ENCODE measurements at regions of chr6 and their contacts with region 1.

Region 1: GRCh38 chr6:33344701-33345697 is 27.5 kb upstream of the ZBTB22 start:
- DNase-seq: peak; percentile 33 to 94 (median 70)
- ATAC-seq: peak; percentile 58
- H3K4me3 ChIP-seq: peak overlapping the region; percentile 40 to 53
- H3K4me3 Mint-ChIP-seq: peak overlapping the region; percentile 82
- H3K27ac ChIP-seq: peak overlapping the region; percentile 75 to 95
- H3K27ac Mint-ChIP-seq: peak overlapping the region; percentile 94
- H3K4me1 ChIP-seq: peaks cover 32% of the 10 kb centered on the region
- H3K4me1 Mint-ChIP-seq: peaks cover 42% of the 10 kb centered on the region
- H3K27me3 ChIP-seq: no peaks in the 10 kb centered on the region
- H3K27me3 Mint-ChIP-seq: no peaks in the 10 kb centered on the region
- CTCF ChIP-seq: peak; percentile 72

Region 2: GRCh38 chr6:33008944-33009861 is 335.8 kb before region 1 on chr6 and contains the start of gene HLA-DOA:
- CTCF ChIA-PET with region 1: no interaction called
- POLR2A ChIA-PET with region 1: no interaction called
- intact Hi-C with region 1: no loop called
- DNase-seq: peak; percentile 27 to 85 (median 65)
- ATAC-seq: peak; percentile 98
- H3K4me3 ChIP-seq: peak within 1 kb of the TSS; percentile 75 to 85
- H3K4me3 Mint-ChIP-seq: peak within 1 kb of the TSS; percentile 95
- H3K27ac ChIP-seq: peak within 1 kb of the TSS; percentile 57 to 77
- H3K27ac Mint-ChIP-seq: peak within 1 kb of the TSS; percentile 97
- H3K4me1 ChIP-seq: peaks cover 11% of the 10 kb centered on the region
- H3K4me1 Mint-ChIP-seq: peaks cover 25% of the 10 kb centered on the region
- H3K27me3 ChIP-seq: no peaks in the 10 kb centered on the region
- H3K27me3 Mint-ChIP-seq: no peaks in the 10 kb centered on the region
- CTCF ChIP-seq: no peak
- total RNA-seq, gene HLA-DOA: 16.2 to 18.5 TPM

Region 3: GRCh38 chr6:33276864-33277662 is 67.9 kb before region 1 on chr6 and contains the start of gene B3GALT4:
- CTCF ChIA-PET with region 1: interaction called, 29 read pairs
- POLR2A ChIA-PET with region 1: interaction called, 29 read pairs
- intact Hi-C with region 1: loop called in 1 of 2 experiments (anchors 1 kb)
- DNase-seq: peak; percentile 28 to 88 (median 68)
- ATAC-seq: peak; percentile 67
- H3K4me3 ChIP-seq: peak within 1 kb of the TSS; percentile 93 to 95
- H3K4me3 Mint-ChIP-seq: peak within 1 kb of the TSS; percentile 89
- H3K27ac ChIP-seq: peak within 1 kb of the TSS; percentile 79 to 95
- H3K27ac Mint-ChIP-seq: peak within 1 kb of the TSS; percentile 92
- H3K4me1 ChIP-seq: peaks cover 61% of the 10 kb centered on the region
- H3K4me1 Mint-ChIP-seq: peaks cover 71% of the 10 kb centered on the region
- H3K27me3 ChIP-seq: no peaks in the 10 kb centered on the region
- H3K27me3 Mint-ChIP-seq: no peaks in the 10 kb centered on the region
- CTCF ChIP-seq: peak; percentile 55
- total RNA-seq, gene B3GALT4: 7.9 to 8.8 TPM

Region 4: DNA sequence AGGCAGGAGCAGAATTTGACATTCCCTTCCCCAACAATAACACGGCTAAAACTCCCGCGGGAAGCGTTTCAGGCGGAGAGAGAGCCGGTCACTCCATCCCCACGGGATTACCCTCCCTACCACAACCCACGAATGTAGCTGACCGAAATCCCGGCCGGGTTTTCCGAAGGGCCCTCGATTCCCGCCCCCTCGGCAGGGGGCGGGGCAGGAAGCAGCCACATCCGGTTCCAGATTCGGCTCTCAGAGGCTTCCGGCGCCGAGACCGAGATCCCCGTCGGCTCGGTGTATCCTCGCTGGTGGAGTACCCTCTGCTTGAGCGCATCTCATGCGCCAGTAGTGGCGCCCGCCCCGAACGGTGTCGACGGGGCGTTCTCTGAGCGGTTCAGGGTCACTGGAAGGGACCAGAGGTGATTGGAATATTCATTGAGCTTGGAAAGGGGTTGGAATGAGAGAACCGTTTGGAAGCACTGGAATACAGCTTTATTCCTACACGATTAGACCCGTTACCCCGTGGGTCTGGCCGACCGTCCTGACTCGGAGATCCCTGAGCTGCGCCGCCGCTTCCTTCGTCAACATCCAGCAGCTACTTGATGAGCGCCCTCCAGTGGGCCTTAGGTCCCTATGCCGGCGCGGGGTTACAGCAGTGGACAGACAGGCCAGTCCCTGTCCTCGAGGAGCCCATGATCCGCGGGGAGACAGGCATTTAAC is 45.6 kb before region 1 on chr6:
- CTCF ChIA-PET with region 1: interaction called, 7 read pairs
- POLR2A ChIA-PET with region 1: interaction called, 45 read pairs
- intact Hi-C with region 1: loop called (anchors 1 kb)
- DNase-seq: peak; percentile 82 to 97 (median 94)
- ATAC-seq: peak; percentile 83
- H3K4me3 ChIP-seq: peak overlapping the region; percentile 88 to 91
- H3K4me3 Mint-ChIP-seq: peak overlapping the region; percentile 99
- H3K27ac ChIP-seq: peak overlapping the region; percentile 83 to 96
- H3K27ac Mint-ChIP-seq: peak overlapping the region; percentile 99
- H3K4me1 ChIP-seq: peaks cover 14% of the 10 kb centered on the region
- H3K4me1 Mint-ChIP-seq: peaks cover 41% of the 10 kb centered on the region
- H3K27me3 ChIP-seq: no peaks in the 10 kb centered on the region
- H3K27me3 Mint-ChIP-seq: no peaks in the 10 kb centered on the region
- CTCF ChIP-seq: peak; percentile 70

Region 5: DNA sequence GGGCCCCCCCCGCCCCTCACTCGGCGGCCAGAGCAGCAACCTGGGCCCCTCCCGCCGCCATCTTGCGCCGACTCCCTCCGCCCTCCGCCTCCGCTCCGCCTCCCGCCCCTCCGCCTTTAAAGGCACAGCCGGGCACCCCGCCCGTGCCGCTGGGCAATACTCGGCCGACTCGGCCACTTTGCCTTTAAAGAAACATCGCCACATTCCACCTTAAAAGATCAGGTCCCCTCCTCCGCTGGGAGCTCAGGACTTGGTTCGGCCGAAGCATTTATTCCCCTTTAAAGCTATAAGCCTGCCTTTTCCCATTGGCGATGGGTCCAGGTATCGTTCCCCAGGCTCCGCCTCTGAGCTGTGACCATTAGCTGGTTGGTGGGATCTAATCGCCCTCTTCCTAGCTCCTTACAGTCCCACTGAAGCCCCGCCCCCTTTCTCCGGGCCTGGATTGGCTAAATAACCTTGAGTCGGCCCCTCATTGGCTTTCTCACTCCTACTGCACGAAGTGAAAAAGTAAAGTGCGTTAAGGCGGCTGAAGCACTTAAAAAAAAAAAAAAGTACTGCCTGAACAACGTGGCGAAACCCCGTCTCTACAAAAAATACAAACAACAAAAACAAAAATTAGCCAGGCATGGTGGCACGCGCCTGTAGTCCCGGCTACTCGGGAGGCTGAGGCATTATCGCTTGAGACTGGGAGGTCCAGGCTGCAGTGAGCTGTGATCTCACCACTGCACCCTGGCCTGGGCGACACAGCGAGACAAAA is 27.2 kb before region 1 on chr6 and contains the start of gene ZBTB22:
- CTCF ChIA-PET with region 1: interaction called, 40 read pairs
- POLR2A ChIA-PET with region 1: interaction called, 44 read pairs
- intact Hi-C with region 1: loop called (anchors 1 kb)
- DNase-seq: peak; percentile 91 to 98 (median 96)
- ATAC-seq: peak; percentile 61
- H3K4me3 ChIP-seq: peak within 1 kb of the TSS; percentile 72 to 78
- H3K4me3 Mint-ChIP-seq: peak within 1 kb of the TSS; percentile 99
- H3K27ac ChIP-seq: peak within 1 kb of the TSS; percentile 60 to 99
- H3K27ac Mint-ChIP-seq: peak within 1 kb of the TSS; percentile 97
- H3K4me1 ChIP-seq: peaks cover 65% of the 10 kb centered on the region
- H3K4me1 Mint-ChIP-seq: peaks cover 77% of the 10 kb centered on the region
- H3K27me3 ChIP-seq: no peaks in the 10 kb centered on the region
- H3K27me3 Mint-ChIP-seq: no peaks in the 10 kb centered on the region
- CTCF ChIP-seq: no peak
- total RNA-seq, gene ZBTB22: 8.8 to 9.3 TPM

Region 6: GRCh38 chr6:33323623-33323948 is 21.4 kb before region 1 on chr6:
- CTCF ChIA-PET with region 1: interaction called, 40 read pairs
- POLR2A ChIA-PET with region 1: interaction called, 4 read pairs
- intact Hi-C with region 1: loop called (anchors 1 kb)
- DNase-seq: peak in 1 of 9 experiments; percentile 29
- ATAC-seq: no peak
- H3K4me3 ChIP-seq: peak overlapping the region; percentile 85 to 93
- H3K4me3 Mint-ChIP-seq: peak overlapping the region; percentile 96
- H3K27ac ChIP-seq: peak overlapping the region; percentile 83 to 91
- H3K27ac Mint-ChIP-seq: peak overlapping the region; percentile 94
- H3K4me1 ChIP-seq: peaks cover 43% of the 10 kb centered on the region
- H3K4me1 Mint-ChIP-seq: peaks cover 53% of the 10 kb centered on the region
- H3K27me3 ChIP-seq: no peaks in the 10 kb centered on the region
- H3K27me3 Mint-ChIP-seq: no peaks in the 10 kb centered on the region
- CTCF ChIP-seq: no peak

Region 7: DNA sequence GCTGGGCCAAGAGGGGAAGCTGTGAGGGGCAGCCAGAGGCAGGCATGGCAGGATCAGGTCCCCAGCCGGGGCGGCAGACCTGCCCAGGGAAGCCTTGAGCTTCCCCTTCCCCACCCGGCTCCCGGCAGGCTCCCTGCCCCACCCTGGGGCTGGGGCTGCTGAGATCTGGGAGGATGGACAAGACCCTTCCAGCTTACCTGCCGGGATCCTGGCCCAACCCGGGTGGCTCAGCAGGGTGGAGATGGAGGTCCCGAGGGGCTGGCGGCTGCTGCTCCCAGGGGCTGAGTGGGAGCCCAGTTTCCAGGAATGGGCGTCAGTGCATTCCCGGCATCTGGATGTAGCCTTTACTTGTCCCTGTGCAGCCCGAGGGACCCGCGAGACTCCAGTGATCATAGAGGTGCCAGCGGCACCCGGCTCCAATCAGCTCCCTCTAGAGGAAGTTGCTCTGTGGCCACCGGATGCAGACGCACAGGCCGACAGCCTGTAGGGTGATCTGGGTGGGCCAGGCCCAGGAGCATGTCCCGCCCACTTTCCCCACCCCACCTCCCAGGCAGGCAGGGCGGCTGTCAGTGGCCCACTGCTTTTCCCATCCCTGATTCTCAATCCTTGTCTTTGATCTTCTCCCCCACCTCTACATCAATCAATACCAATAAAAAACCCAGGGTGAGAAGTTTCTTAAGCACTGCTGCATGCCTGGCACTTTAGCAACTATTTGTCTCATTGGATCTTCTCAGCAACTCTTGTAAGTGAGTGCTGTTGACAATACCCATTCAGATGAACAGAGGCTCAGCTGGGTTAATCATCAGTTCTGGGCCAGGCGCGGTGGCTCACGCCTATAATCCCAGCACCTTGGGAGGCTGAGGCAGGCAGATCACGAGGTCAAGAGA is 235.1 kb after region 1 on chr6 and contains the start of gene BAK1:
- CTCF ChIA-PET with region 1: interaction called, 3 read pairs
- POLR2A ChIA-PET with region 1: no interaction called
- intact Hi-C with region 1: loop called in 1 of 2 experiments (anchors 10 kb)
- DNase-seq: peak; percentile 59 to 94 (median 85)
- ATAC-seq: peak; percentile 94
- H3K4me3 ChIP-seq: peak within 1 kb of the TSS; percentile 97 to 98
- H3K4me3 Mint-ChIP-seq: peak within 1 kb of the TSS; percentile 93
- H3K27ac ChIP-seq: peak within 1 kb of the TSS; percentile 85 to 87
- H3K27ac Mint-ChIP-seq: peak within 1 kb of the TSS; percentile 98
- H3K4me1 ChIP-seq: peaks cover 29% of the 10 kb centered on the region
- H3K4me1 Mint-ChIP-seq: peaks cover 31% of the 10 kb centered on the region
- H3K27me3 ChIP-seq: no peaks in the 10 kb centered on the region
- H3K27me3 Mint-ChIP-seq: no peaks in the 10 kb centered on the region
- CTCF ChIP-seq: peak; percentile 44
- total RNA-seq, gene BAK1: 44.8 to 46.5 TPM

Region 8: DNA sequence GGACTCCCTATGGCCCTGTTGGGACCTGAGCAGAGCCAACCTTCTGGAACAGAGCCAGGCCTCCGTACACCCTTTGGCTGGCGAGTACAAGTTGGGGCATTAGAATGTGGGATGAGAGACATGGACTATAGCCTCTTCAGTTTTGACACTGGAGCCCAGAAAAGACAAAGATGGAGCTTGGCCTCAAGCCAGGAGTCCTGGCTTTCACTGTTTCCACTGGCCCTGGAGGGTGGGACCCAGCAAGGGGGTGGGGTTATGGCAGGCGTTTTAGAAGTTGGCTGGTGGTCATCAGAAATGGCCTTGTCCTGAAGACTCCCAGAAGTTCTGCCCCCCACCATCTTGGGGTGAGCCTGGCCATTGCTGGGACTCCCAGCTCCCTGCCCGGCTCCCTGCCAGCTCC is 297.9 kb after region 1 on chr6:
- CTCF ChIA-PET with region 1: no interaction called
- POLR2A ChIA-PET with region 1: no interaction called
- intact Hi-C with region 1: no loop called
- DNase-seq: no peak
- ATAC-seq: no peak
- H3K4me3 ChIP-seq: no peak overlapping the region
- H3K4me3 Mint-ChIP-seq: no peak overlapping the region
- H3K27ac ChIP-seq: no peak overlapping the region
- H3K27ac Mint-ChIP-seq: no peak overlapping the region
- H3K4me1 ChIP-seq: no peaks in the 10 kb centered on the region
- H3K4me1 Mint-ChIP-seq: peaks cover 28% of the 10 kb centered on the region
- H3K27me3 ChIP-seq: no peaks in the 10 kb centered on the region
- H3K27me3 Mint-ChIP-seq: no peaks in the 10 kb centered on the region
- CTCF ChIP-seq: no peak

Measured in CD8-positive, alpha-beta T cell (primary cell).